SK-N-SH (cell line): ENCODE measurements at regions of chr19 and their contacts with region 1.

Region 1: DNA sequence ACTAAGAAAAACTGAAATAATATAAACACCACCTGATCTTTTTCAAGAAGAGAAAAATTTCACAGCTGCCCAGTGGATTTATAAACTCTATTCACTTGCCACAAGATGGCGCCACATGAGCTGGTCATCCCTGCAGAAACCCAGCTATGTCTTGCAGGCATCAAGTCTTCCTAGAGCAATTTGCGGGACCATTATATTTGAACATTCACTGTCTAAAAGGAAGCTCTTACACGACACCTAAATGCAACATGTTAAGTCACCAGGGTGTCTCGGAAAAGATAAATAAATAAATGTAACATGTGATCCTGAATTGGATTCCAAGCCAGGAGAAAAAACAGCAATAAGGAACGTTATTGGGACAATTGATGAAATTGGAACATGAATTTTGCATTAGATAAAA is 20.3 kb upstream of the AKT2 start:
- DNase-seq: peak; percentile 83
- H3K4me3 ChIP-seq: no peak overlapping the region; a peak in 1 of 4 replicates
- H3K27ac ChIP-seq: no peak overlapping the region
- H3K4me1 ChIP-seq: peaks cover 0 to 20% of the 10 kb centered on the region in 2 experiments; a peak in 1 of 4 replicates
- H3K27me3 ChIP-seq: no peaks in the 10 kb centered on the region
- CTCF ChIP-seq: peak; percentile 89
- EP300 ChIP-seq: no peak
- RAD21 ChIP-seq: peak; percentile 91

Region 2: GRCh38 chr19:40315812-40316475 is 10.5 kb after region 1 on chr19:
- CTCF ChIA-PET with region 1: interaction called, 25 read pairs
- POLR2A ChIA-PET with region 1: no interaction called
- DNase-seq: peak; percentile 57
- H3K4me3 ChIP-seq: no peak overlapping the region
- H3K27ac ChIP-seq: no peak overlapping the region; a peak in 1 of 4 replicates
- H3K4me1 ChIP-seq: peaks cover 0 to 5% of the 10 kb centered on the region in 2 experiments; a peak in 1 of 4 replicates
- H3K27me3 ChIP-seq: no peaks in the 10 kb centered on the region
- CTCF ChIP-seq: no peak
- EP300 ChIP-seq: no peak
- RAD21 ChIP-seq: no peak

Region 3: DNA sequence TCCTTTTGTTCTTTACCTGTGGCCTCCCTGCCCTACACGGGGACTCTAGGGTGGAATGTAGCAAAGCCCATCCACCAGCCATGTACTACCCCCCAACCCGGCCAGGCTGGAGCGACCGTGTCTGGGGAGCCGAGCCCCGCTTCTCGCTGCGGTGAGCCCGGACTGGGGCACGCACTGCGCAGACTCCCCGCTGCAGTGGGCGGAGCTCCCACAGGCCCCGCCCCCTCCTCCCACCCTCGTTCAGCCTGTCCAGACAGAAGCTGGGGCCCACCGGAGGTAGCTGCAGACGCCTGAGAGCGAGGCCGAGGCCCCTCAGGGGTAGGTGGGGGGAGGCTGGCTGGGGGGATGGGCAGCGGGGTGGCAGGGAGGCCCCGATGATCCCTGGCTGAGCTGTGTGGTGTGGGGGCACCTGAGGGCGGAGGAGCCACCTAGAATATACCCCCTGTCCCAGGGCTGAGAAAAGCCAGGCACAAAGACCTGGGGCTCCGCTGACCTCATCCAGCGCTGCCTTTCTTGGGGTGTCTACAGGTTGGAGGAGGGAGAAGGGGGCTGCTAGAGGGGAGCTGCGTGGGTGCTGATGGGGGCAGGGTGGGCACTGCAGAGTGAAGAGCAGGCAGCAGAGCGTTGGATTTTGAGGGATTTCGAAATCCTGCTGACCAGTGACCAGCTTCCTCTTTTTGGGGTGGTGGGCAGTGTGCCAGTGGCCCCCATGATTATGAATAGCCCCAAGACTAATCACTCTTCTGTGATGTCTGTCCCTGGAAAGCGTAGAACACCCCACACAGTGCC is 60.4 kb after region 1 on chr19:
- CTCF ChIA-PET with region 1: interaction called, 12 read pairs
- POLR2A ChIA-PET with region 1: no interaction called
- DNase-seq: peak; percentile 99
- H3K4me3 ChIP-seq: peak overlapping the region; percentile 49 to 66
- H3K27ac ChIP-seq: peak overlapping the region in 1 of 2 experiments; percentile 70; a peak in 2 of 4 replicates
- H3K4me1 ChIP-seq: peaks cover 0 to 14% of the 10 kb centered on the region in 2 experiments; a peak in 2 of 4 replicates
- H3K27me3 ChIP-seq: no peaks in the 10 kb centered on the region
- CTCF ChIP-seq: no peak
- EP300 ChIP-seq: no peak
- RAD21 ChIP-seq: no peak

Region 4: GRCh38 chr19:40420766-40421764 is 115.7 kb after region 1 on chr19:
- CTCF ChIA-PET with region 1: interaction called, 10 read pairs
- POLR2A ChIA-PET with region 1: interaction called, 4 read pairs
- DNase-seq: peak; percentile 91
- H3K4me3 ChIP-seq: peak overlapping the region; percentile 52 to 67
- H3K27ac ChIP-seq: peak overlapping the region; percentile 92 to 97
- H3K4me1 ChIP-seq: peaks cover 6 to 17% of the 10 kb centered on the region in 2 experiments; a peak in 3 of 4 replicates
- H3K27me3 ChIP-seq: no peaks in the 10 kb centered on the region
- CTCF ChIP-seq: peak; percentile 97
- EP300 ChIP-seq: peak in 1 of 2 experiments; percentile 48; a peak in 1 of 4 replicates
- RAD21 ChIP-seq: peak; percentile 59

Region 5: GRCh38 chr19:40444192-40445028 is 139.0 kb after region 1 on chr19 and contains the start of gene SERTAD3:
- CTCF ChIA-PET with region 1: interaction called, 15 read pairs
- POLR2A ChIA-PET with region 1: interaction called, 3 read pairs
- DNase-seq: peak; percentile 96
- H3K4me3 ChIP-seq: peak within 1 kb of the TSS; percentile 88 to 100
- H3K27ac ChIP-seq: peak within 1 kb of the TSS; percentile 96
- H3K4me1 ChIP-seq: peaks cover 5 to 8% of the 10 kb centered on the region in 2 experiments; a peak in 2 of 4 replicates
- H3K27me3 ChIP-seq: no peaks in the 10 kb centered on the region
- CTCF ChIP-seq: peak; percentile 40; the same call in 1 of the 2 replicates
- EP300 ChIP-seq: peak in 1 of 2 experiments; percentile 7; a peak in 1 of 4 replicates
- RAD21 ChIP-seq: peak; percentile 68
- polyA plus RNA-seq, gene SERTAD3: 11.3 and 12.9 TPM in 2 replicates

Region 6: GRCh38 chr19:40465557-40466150 is 160.3 kb after region 1 on chr19 and contains the start of gene BLVRB:
- CTCF ChIA-PET with region 1: interaction called, 18 read pairs
- POLR2A ChIA-PET with region 1: interaction called, 4 read pairs
- DNase-seq: peak; percentile 97
- H3K4me3 ChIP-seq: peak within 1 kb of the TSS; percentile 61 to 79
- H3K27ac ChIP-seq: peak within 1 kb of the TSS; percentile 3 to 79; a peak in 3 of 4 replicates
- H3K4me1 ChIP-seq: peaks cover 5 to 17% of the 10 kb centered on the region in 2 experiments; a peak in 3 of 4 replicates
- H3K27me3 ChIP-seq: no peaks in the 10 kb centered on the region
- CTCF ChIP-seq: no peak
- EP300 ChIP-seq: no peak
- RAD21 ChIP-seq: no peak
- polyA plus RNA-seq, gene BLVRB: 69.7 and 85.9 TPM in 2 replicates

Region 7: DNA sequence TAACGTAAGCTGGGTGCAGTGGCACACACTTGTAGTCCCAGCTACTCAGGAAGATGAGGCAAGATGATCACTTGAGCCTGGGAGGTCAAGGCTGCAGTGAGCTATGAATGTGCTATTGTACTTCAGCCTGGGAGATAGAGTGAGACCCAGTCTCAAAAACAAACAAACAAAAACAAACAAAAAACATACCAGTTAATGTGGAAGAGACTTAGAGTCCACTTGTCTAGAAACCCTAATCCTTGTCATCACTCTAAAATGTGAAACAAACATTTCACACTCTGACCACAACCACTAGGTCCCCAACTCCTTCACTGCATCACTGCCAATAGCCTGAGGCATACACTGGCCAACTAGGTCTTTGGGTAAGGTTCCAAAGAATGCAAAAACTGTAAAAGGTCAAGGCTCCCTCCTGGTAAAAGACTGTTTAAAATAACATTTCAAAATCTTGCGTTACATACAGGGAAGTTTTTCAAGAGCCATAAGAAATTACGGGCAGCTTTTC is 657.1 kb after region 1 on chr19:
- CTCF ChIA-PET with region 1: no interaction called
- POLR2A ChIA-PET with region 1: no interaction called
- DNase-seq: no peak
- H3K4me3 ChIP-seq: no peak overlapping the region
- H3K27ac ChIP-seq: no peak overlapping the region
- H3K4me1 ChIP-seq: no peaks in the 10 kb centered on the region
- H3K27me3 ChIP-seq: peaks cover 21% of the 10 kb centered on the region; the same call in 1 of the 2 replicates
- CTCF ChIP-seq: no peak
- EP300 ChIP-seq: no peak
- RAD21 ChIP-seq: no peak